ENCODE measurements at regions of chr20 and their contacts with region 1.

Region 1: GRCh38 chr20:48695207-48695635 is 132.6 kb downstream of the PREX1 start:
- DNase-seq: peak; percentile 12
- H3K4me3 ChIP-seq: no peak overlapping the region
- H3K27ac ChIP-seq: no peak overlapping the region
- H3K4me1 ChIP-seq: no peaks in the 10 kb centered on the region
- H3K27me3 ChIP-seq: no peaks in the 10 kb centered on the region
- CTCF ChIP-seq: no peak

Region 2: DNA sequence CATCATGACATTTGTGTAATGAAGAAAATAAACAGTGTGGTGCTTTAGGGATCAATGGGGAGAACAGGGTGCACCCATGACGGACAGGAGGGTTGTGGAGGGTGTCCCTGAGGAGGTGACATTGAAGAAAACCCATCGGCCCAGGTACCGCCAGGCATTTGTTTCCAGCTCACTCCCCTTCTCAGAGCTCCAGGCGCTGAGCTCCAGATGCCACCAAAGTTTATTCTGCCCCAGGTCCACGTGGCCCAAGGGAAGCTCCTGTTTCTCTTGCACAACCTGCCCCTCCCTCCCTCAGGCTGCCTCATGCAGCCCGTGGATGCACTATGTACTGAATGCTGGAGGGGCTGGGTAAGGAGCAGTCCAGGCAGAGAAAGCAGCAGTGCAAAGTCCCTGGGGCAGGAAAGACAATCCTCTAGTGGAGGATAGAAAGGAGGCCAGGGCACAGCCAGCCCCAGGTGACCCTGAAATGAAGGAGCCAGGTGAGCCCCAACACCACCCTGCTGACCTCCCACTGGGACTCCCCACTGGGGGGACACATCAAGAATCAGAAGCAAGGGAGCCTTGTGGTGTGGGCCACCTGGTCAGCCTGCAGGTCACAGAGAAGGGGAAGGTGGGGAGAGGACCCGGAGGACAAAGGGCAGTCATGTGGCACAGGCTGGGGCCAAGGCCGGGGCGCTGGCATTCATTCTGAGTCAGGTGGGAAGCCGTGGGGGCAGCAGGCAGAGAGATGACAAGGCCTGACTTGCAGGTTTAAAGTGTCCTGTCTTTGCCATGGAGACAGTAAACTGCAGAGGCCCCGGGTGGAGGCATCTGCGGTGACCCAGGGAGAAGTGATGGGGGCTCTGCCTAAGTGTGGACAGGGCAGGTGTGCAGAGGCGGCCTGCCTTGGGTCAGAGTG is 97.6 kb before region 1 on chr20:
- CTCF ChIA-PET with region 1: interaction called, 12 read pairs
- dilution Hi-C with region 1: no loop called
- in situ Hi-C with region 1: no loop called
- intact Hi-C with region 1: no loop called
- DNase-seq: no peak
- H3K4me3 ChIP-seq: no peak overlapping the region
- H3K27ac ChIP-seq: no peak overlapping the region
- H3K4me1 ChIP-seq: no peaks in the 10 kb centered on the region
- H3K27me3 ChIP-seq: no peaks in the 10 kb centered on the region
- CTCF ChIP-seq: no peak

Region 3: DNA sequence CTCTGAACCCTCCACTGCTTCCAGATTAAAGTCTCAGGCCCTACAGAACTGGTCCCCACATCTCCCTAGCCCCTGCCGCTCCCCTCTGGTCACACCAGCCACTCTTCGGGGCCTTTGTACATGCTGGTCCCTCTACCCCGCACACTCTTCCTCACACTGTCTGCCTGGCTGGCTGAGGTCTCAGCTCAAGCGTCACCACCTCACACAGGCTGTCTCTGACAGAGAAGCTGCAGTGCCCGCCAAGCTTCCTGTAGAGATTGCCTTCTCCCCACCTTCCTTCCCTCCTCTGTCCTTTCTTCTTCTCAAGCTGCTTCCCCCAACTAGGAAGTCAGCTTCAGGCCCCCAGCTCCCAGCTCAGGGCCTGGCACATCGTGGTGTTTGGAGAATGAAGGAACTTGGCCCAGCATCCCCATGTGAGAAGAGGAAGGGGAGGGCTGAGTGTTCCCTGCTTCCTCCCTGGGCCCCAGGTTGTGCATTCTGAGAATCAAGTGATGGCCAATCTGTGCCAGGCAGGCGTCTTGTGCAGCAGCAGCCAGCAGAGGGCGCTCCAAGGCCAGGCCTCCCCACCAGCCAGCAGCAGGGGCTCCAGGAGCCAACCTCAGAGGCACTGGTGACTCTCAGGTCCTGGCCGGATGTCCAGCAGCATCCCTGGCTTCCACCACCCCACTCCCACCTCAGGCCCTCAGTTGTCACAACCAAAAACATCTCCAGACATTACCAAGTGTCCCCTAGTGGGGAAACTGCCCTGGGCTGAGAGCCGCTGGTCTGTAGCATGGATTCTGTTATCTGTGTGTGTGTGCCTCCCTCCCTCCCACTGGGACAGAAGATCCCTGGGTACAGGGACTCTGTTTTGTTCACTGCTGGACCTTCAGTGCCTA is 59.5 kb before region 1 on chr20:
- CTCF ChIA-PET with region 1: no interaction called
- dilution Hi-C with region 1: no loop called
- in situ Hi-C with region 1: no loop called
- intact Hi-C with region 1: no loop called
- DNase-seq: peak; percentile 26
- H3K4me3 ChIP-seq: no peak overlapping the region
- H3K27ac ChIP-seq: no peak overlapping the region
- H3K4me1 ChIP-seq: no peaks in the 10 kb centered on the region
- H3K27me3 ChIP-seq: no peaks in the 10 kb centered on the region
- CTCF ChIP-seq: peak; percentile 89 to 91

Measured in mammary epithelial cell (primary cell).